ENCODE measurements at regions of chr9 and their contacts with region 1.

Region 1: DNA sequence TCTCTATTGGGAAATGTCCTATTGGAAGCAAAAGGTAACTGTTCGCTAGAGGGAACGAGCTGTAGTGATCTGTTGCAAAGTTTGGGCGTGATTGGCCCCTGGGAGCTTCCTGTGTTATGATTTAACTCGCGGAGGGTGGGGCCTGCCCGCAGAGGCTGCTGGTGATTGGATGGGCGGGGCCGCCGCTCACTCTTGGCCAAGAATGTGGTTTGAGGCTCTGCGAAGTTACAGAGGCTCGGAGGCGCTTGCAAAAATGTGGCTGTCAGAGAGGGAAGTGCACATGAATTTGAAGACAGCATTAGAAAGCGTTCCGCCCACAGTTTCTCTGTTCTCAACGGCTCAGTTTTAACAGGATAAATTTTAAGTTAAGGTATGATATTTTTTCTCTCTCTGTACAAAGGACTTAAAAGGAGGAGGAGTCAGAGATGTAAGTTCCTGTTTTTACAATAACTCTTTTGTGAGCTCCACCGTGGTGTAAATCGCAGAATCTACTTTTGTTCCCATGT is 46.9 kb downstream of the CNTRL start:
- DNase-seq: peak; percentile 91 to 98 (median 96)
- ATAC-seq: peak; percentile 95
- H3K4me3 ChIP-seq: peak overlapping the region; percentile 48 to 61
- H3K4me3 Mint-ChIP-seq: peak overlapping the region; percentile 89
- H3K27ac ChIP-seq: peak overlapping the region; percentile 54 to 64
- H3K27ac Mint-ChIP-seq: peak overlapping the region; percentile 98
- H3K4me1 ChIP-seq: peaks cover 40% of the 10 kb centered on the region
- H3K4me1 Mint-ChIP-seq: peaks cover 53% of the 10 kb centered on the region
- H3K27me3 ChIP-seq: no peaks in the 10 kb centered on the region
- H3K27me3 Mint-ChIP-seq: no peaks in the 10 kb centered on the region
- CTCF ChIP-seq: peak; percentile 30

Region 2: GRCh38 chr9:120714088-120714845 is 407.4 kb before region 1 on chr9 and contains the start of gene MEGF9:
- CTCF ChIA-PET with region 1: no interaction called
- POLR2A ChIA-PET with region 1: no interaction called
- intact Hi-C with region 1: loop called (anchors 1 to 5 kb)
- DNase-seq: peak; percentile 89 to 98 (median 96)
- ATAC-seq: peak; percentile 94
- H3K4me3 ChIP-seq: peak within 1 kb of the TSS; percentile 69 to 92
- H3K4me3 Mint-ChIP-seq: peak within 1 kb of the TSS; percentile 83
- H3K27ac ChIP-seq: peak within 1 kb of the TSS; percentile 61 to 64
- H3K27ac Mint-ChIP-seq: peak within 1 kb of the TSS; percentile 86
- H3K4me1 ChIP-seq: peaks cover 38% of the 10 kb centered on the region
- H3K4me1 Mint-ChIP-seq: peaks cover 35% of the 10 kb centered on the region
- H3K27me3 ChIP-seq: no peaks in the 10 kb centered on the region
- H3K27me3 Mint-ChIP-seq: no peaks in the 10 kb centered on the region
- CTCF ChIP-seq: no peak
- total RNA-seq, gene MEGF9: 3.0 to 3.1 TPM

Region 3: GRCh38 chr9:120807607-120808379 is 313.8 kb before region 1 on chr9:
- CTCF ChIA-PET with region 1: no interaction called
- POLR2A ChIA-PET with region 1: no interaction called
- intact Hi-C with region 1: no loop called
- DNase-seq: no peak
- ATAC-seq: no peak
- H3K4me3 ChIP-seq: no peak overlapping the region
- H3K4me3 Mint-ChIP-seq: no peak overlapping the region
- H3K27ac ChIP-seq: no peak overlapping the region
- H3K27ac Mint-ChIP-seq: no peak overlapping the region
- H3K4me1 ChIP-seq: no peaks in the 10 kb centered on the region
- H3K4me1 Mint-ChIP-seq: no peaks in the 10 kb centered on the region
- H3K27me3 ChIP-seq: no peaks in the 10 kb centered on the region
- H3K27me3 Mint-ChIP-seq: no peaks in the 10 kb centered on the region
- CTCF ChIP-seq: no peak

Region 4: DNA sequence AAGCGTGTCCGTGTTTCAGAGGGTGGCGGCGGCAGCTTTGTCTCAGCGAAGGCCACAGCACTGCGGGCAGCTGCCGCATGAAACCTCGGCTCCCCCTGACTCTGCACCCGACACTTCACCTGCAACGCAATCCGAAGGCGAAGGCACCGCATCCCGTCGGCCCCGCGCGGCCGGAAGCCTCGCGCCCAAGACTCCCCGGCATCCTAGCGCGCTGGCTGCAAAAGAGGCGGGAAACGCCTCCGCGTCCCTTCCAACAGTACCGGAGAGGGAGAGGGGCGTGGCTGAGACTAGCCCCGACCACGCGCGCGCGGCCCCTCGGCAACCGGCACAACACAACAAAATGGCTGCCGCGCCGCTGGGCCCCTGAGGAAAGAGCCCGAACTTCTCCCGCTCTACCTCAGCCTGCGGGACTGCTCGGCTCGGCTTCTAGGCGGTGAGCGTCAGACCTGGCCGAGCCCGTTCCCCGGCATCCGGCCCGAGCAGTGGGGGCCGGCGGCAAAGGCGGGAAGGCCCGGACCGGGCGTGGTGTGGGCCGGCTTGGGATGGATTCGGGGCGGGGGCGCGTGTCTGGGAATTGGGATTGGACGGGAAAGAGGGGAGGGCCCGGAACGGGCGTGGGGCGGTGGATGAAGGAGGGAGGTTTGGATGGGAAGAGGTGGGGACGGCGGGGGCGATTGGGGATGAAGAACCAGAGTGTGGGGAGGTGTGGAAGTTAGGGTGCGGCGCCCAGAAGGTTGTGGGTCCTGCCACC is 46.8 kb before region 1 on chr9 and contains the start of gene CNTRL:
- CTCF ChIA-PET with region 1: interaction called, 3 read pairs
- POLR2A ChIA-PET with region 1: interaction called, 5 read pairs
- intact Hi-C with region 1: loop called (anchors 1 to 2 kb)
- DNase-seq: peak; percentile 62 to 91 (median 85)
- ATAC-seq: peak; percentile 83
- H3K4me3 ChIP-seq: peak within 1 kb of the TSS; percentile 78 to 80
- H3K4me3 Mint-ChIP-seq: peak within 1 kb of the TSS; percentile 98
- H3K27ac ChIP-seq: peak within 1 kb of the TSS; percentile 77 to 80
- H3K27ac Mint-ChIP-seq: peak within 1 kb of the TSS; percentile 95
- H3K4me1 ChIP-seq: peaks cover 19% of the 10 kb centered on the region
- H3K4me1 Mint-ChIP-seq: peaks cover 43% of the 10 kb centered on the region
- H3K27me3 ChIP-seq: no peaks in the 10 kb centered on the region
- H3K27me3 Mint-ChIP-seq: no peaks in the 10 kb centered on the region
- CTCF ChIP-seq: no peak
- total RNA-seq, gene CNTRL: 29.8 to 30.8 TPM

Region 5: DNA sequence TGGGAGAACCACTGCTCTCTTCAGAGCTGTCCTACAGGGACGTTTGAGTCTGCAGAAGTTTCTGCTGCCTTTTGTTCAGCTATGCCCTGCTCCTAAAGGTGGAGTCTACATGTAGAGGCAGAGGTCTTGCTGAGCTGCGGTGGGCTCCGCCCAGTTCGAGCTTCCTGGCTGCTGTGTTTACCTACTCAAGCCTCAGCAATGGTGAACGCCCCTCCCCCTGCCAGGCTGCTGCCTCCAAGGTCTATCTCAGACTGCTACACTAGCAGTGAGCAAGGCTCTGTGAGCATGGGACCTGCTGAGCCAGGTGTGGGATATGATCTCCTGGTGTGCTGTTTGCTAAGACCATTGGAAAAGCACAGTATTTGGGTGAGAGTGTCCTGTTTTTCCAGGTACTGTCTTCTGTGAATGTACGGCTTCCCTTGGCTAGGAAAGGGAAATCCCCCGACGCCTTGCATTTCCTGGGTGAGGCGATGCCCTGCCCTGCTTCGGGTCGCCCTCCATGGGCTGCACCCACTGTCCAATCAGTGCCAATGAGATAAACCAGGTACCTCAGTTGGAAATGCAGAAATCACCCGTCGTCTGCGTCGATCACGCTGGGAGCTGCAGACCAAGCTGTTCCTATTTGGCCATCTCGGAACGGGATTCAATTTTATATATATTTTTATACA is 11.6 kb after region 1 on chr9:
- CTCF ChIA-PET with region 1: interaction called, 20 read pairs
- POLR2A ChIA-PET with region 1: interaction called, 34 read pairs
- intact Hi-C with region 1: loop called (anchors 1 kb)
- DNase-seq: peak; percentile 62 to 91 (median 78)
- ATAC-seq: peak; percentile 99
- H3K4me3 ChIP-seq: peak overlapping the region; percentile 23 to 27
- H3K4me3 Mint-ChIP-seq: peak overlapping the region; percentile 65
- H3K27ac ChIP-seq: peak overlapping the region; percentile 4 to 64
- H3K27ac Mint-ChIP-seq: peak overlapping the region; percentile 85
- H3K4me1 ChIP-seq: peaks cover 20% of the 10 kb centered on the region
- H3K4me1 Mint-ChIP-seq: peaks cover 73% of the 10 kb centered on the region
- H3K27me3 ChIP-seq: no peaks in the 10 kb centered on the region
- H3K27me3 Mint-ChIP-seq: no peaks in the 10 kb centered on the region
- CTCF ChIP-seq: no peak

Region 6: GRCh38 chr9:121169094-121169601 is 47.5 kb after region 1 on chr9:
- CTCF ChIA-PET with region 1: interaction called, 7 read pairs
- POLR2A ChIA-PET with region 1: interaction called, 10 read pairs
- intact Hi-C with region 1: no loop called
- DNase-seq: peak in 5 of 9 experiments; percentile 16 to 69 (median 39)
- ATAC-seq: peak; percentile 89
- H3K4me3 ChIP-seq: no peak overlapping the region
- H3K4me3 Mint-ChIP-seq: no peak overlapping the region
- H3K27ac ChIP-seq: peak overlapping the region; percentile 16 to 49
- H3K27ac Mint-ChIP-seq: peak overlapping the region; percentile 83
- H3K4me1 ChIP-seq: peaks cover 20% of the 10 kb centered on the region
- H3K4me1 Mint-ChIP-seq: peaks cover 23% of the 10 kb centered on the region
- H3K27me3 ChIP-seq: no peaks in the 10 kb centered on the region
- H3K27me3 Mint-ChIP-seq: no peaks in the 10 kb centered on the region
- CTCF ChIP-seq: peak; percentile 57

Region 7: DNA sequence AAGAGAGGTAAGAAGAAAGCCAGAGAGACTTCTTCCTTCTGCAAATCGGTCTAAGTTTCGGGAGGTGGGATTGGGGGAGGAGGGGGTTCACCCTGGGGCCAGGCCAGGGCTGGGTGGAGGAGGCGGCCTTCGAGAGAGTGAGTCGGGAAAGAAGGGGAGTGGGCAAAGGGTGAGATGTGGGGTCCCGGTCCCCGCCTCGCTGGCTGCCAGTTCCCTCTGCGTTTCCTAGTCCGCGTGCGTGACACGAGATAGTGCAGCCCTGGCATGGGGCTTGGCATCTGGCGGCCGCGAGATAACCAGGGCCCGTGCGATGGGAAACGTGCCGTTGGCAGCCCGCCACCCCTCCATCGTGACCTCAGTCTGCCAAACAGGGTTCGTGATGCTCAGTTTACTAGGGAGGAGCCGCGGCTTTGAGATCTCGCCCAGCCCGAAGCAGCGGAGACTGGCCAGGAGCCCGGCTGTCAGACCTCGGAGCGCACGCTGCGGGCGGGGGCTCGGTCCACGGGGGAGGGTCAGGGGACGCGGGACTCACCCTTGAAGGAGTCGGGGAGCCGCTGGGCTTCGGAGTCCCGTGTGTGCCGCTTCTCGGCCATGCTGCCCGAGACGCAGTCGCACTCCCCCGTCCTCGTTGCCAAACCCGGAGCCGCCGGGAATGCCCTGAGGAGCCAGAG is 248.1 kb after region 1 on chr9 and contains the start of gene STOM:
- CTCF ChIA-PET with region 1: no interaction called
- POLR2A ChIA-PET with region 1: no interaction called
- intact Hi-C with region 1: loop called in 1 of 2 experiments (anchors 5 kb)
- DNase-seq: peak in 8 of 9 experiments; percentile 35 to 87 (median 68)
- ATAC-seq: peak; percentile 53
- H3K4me3 ChIP-seq: peak within 1 kb of the TSS; percentile 86 to 96
- H3K4me3 Mint-ChIP-seq: peak within 1 kb of the TSS; percentile 92
- H3K27ac ChIP-seq: peak within 1 kb of the TSS; percentile 67 to 90
- H3K27ac Mint-ChIP-seq: peak within 1 kb of the TSS; percentile 90
- H3K4me1 ChIP-seq: peaks cover 11% of the 10 kb centered on the region
- H3K4me1 Mint-ChIP-seq: peaks cover 66% of the 10 kb centered on the region
- H3K27me3 ChIP-seq: no peaks in the 10 kb centered on the region
- H3K27me3 Mint-ChIP-seq: no peaks in the 10 kb centered on the region
- CTCF ChIP-seq: no peak
- total RNA-seq, gene STOM: 47.4 to 48.2 TPM